ENCODE measurements at regions of chr1 and their contacts with region 1.

Region 1: DNA sequence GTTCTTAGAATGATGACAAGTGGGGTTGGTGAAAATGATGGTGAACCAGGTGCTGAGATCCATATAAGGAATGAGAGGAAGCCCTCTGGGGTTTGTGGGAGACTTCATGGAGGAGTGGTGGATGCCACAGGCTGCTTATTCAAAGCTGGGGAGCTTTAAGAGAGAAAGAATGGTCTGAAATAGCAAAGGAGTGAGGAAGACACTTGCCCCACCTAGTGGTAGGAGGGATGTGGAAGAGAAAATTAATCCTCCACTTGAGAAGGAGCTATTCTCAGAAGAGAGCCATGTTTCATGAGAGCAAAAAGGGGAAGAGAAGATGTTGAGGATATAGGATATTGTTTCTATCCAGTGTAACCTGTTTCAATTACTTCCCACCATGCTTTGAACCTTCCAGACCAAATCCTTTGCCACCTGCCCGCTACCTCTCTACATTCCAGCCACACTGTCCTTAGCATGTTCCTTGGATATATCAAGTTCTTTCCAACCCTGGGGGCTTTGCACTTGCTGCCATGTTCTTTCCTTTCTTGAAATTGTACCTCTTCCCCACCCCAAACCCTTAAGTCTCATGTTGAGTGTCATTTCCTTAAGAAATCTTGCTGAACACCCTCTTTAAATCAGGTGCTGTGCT is 19.6 kb upstream of the ZNF648 start:
- DNase-seq: peak; percentile 62

Region 2: GRCh38 chr1:181479137-181479745 is 601.8 kb before region 1 on chr1:
- CTCF ChIA-PET with region 1: interaction called, 16 read pairs
- POLR2A ChIA-PET with region 1: no interaction called
- DNase-seq: peak; percentile 79

Region 3: DNA sequence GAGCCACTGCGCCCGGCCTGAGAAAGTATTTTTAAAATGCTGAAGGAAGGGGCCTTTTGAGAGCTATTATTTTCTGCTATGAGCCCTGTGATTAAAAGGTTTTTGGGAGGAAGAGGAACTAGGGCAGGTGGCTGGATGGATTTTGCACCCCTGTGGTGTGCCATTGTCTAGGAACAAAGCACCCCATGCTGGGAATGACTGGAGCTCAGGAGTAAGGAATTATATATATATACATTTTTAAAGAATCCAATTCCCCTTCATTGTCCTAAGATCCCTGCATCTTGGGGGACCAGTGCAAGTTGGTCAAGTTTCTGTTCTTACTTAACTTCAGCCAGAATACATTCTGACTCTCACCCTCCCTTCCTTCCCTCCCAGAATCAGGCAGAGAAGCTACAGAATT is 111.2 kb before region 1 on chr1:
- CTCF ChIA-PET with region 1: no interaction called
- POLR2A ChIA-PET with region 1: no interaction called
- DNase-seq: no peak

Region 4: DNA sequence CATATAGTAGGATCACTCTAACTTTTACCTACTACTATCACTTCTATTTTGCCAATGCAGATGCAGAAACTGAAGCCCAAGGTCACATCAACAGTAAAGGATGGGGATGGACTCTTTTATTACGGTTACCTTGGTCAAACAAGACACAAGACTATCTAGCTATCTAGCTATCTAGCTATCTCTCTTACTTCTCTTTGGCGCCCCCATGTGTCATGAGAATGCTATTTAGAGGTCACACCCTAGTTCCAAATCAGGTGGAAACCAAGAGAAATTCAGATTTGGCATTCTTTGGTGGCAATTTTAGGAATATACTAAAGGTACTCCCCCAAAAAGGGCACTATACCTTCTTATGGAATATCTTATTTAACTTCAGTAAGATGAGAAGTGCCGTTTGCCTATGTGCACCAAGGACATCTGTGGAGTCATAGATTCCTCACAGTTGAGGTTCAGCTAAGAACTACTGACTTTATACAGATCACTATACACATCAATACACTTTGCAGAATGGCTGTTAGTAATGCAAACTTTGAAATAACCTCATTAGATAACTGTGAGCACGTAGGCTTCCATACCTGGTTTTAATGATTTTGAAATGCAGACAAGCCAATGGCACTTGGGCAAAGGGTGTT is 26.3 kb before region 1 on chr1:
- CTCF ChIA-PET with region 1: interaction called, 12 read pairs
- POLR2A ChIA-PET with region 1: no interaction called
- DNase-seq: peak; percentile 37

Region 5: GRCh38 chr1:182069028-182069466 is 12.0 kb before region 1 on chr1:
- CTCF ChIA-PET with region 1: interaction called, 24 read pairs
- POLR2A ChIA-PET with region 1: no interaction called
- DNase-seq: peak; percentile 92

Region 6: DNA sequence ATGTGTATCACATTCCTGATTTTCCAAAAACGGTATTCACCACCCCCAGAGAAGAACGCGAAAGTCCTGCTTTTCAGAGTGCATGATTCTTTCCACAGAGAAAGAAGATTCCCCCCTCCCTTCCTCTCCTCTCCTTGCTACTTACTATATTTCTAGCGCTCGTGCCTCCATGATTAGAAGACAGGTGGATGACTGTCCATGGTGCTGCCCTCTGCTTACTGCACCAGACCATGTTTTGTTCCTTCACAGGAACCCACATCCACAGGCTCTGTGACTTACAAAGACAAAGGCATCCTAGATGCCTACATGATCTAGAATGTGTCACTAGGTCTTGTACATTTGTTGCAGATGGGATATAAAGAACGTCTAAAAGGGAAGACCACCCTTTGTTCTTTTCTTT is 29.6 kb after region 1 on chr1:
- CTCF ChIA-PET with region 1: no interaction called
- POLR2A ChIA-PET with region 1: no interaction called
- DNase-seq: no peak

Region 7: GRCh38 chr1:182143154-182143657 is 62.1 kb after region 1 on chr1:
- CTCF ChIA-PET with region 1: interaction called, 10 read pairs
- POLR2A ChIA-PET with region 1: no interaction called
- DNase-seq: peak; percentile 87

Region 8: GRCh38 chr1:182374101-182374834 is 293.2 kb after region 1 on chr1:
- CTCF ChIA-PET with region 1: no interaction called
- POLR2A ChIA-PET with region 1: no interaction called
- DNase-seq: no peak

Measured in HEK293T (cell line).